HEK293 (cell line): ENCODE measurements at regions of chr6 and their contacts with region 1.

Region 1: GRCh38 chr6:24581084-24581669 is 64.8 kb downstream of the KIAA0319 start:
- H3K4me3 ChIP-seq: no peak overlapping the region
- H3K27ac ChIP-seq: no peak overlapping the region
- H3K4me1 ChIP-seq: peaks cover 12% of the 10 kb centered on the region
- CTCF ChIP-seq: peak; percentile 81

Region 2: DNA sequence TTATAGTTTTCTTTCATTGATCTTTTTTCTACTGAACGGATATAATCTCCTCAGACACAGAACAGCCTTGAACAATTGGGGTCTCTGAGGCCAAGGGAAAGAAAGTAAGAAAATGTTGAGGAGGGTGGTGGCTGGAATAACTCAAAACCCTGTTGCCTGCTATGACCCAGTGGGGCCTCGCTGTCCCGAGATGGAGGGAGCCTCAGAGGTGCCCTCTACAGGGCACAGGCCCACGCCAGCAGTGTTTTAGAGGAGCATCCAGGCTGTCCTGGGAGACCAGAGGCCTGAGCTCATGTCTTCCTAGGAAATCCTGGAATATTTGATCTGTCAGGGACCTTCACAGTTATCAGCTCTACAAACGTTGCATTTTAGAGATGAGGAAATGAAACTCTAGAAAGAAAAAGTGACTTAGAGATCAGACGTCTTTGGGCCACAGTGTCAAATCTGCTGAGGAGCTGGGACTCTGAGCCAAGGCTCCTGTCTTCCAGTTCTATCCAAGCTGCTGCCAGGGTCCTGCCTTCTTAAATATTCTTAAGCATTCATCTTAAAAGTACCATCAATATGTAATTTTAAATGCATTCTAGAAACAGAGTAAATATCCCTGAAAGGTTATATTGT is 60.1 kb before region 1 on chr6:
- CTCF ChIA-PET with region 1: interaction called, 32 read pairs
- POLR2A ChIA-PET with region 1: no interaction called
- H3K4me3 ChIP-seq: no peak overlapping the region
- H3K27ac ChIP-seq: no peak overlapping the region
- H3K4me1 ChIP-seq: no peaks in the 10 kb centered on the region
- CTCF ChIP-seq: peak; percentile 39; the same call in 1 of the 2 replicates

Region 3: DNA sequence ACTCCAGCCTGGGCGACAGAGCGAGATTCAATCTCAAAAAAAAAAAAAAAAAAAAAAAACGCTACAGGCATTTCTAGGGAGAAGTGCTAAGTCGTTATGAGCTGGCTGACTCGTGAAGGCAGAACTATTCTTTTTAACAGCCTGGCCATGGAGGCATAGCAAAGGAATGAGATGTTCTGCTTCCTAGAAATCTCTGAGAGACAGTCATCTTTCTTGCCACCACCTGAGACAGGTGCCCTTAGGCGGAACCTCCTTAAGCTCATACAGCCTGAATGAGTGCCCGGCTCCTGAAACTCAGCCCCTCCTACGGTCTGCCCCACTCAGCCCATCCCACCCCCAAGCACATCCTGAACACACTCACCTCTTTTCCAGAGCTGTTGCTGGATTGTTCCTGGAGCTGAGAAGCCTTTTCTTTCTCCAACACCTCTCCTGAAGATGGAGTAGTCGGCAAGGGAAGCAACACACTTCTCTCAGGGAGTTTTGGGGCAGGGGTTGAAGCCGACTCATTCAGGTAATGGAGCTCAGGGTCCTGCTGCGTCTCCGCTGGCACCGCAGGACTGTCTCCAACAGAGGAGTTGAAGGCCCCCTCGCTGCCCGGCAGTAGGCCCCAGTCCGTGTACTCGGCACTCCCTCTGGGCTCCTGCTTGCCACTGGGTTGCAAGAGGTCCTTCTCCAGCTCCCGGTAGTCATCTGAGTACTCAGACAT is 14.5 kb after region 1 on chr6:
- CTCF ChIA-PET with region 1: interaction called, 21 read pairs
- POLR2A ChIA-PET with region 1: interaction called, 4 read pairs
- H3K4me3 ChIP-seq: no peak overlapping the region
- H3K27ac ChIP-seq: no peak overlapping the region
- H3K4me1 ChIP-seq: no peaks in the 10 kb centered on the region
- CTCF ChIP-seq: no peak

Region 4: DNA sequence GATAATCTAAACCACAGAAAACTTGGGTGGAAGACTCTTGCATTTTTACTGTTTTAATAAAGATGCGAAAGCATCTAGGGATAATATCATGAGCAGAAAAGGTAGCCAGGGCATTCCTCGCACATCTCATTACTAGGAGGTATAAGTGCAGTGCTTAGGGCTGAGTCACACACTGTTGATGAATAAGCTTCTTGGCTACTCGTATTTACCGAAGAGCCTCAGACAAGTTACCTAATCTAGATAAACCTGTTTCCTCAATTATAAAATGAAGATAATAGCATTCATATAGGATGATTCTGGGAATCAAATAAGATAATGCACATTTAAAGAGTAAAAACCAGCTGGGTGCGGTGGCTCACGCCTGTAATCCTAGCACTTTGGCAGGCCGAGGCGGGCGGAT is 65.6 kb after region 1 on chr6:
- CTCF ChIA-PET with region 1: interaction called, 10 read pairs
- POLR2A ChIA-PET with region 1: no interaction called
- H3K4me3 ChIP-seq: no peak overlapping the region
- H3K27ac ChIP-seq: no peak overlapping the region
- H3K4me1 ChIP-seq: no peaks in the 10 kb centered on the region
- CTCF ChIP-seq: no peak

Region 5: GRCh38 chr6:24689964-24690363 is 108.8 kb after region 1 on chr6:
- CTCF ChIA-PET with region 1: interaction called, 18 read pairs
- POLR2A ChIA-PET with region 1: no interaction called
- H3K4me3 ChIP-seq: no peak overlapping the region
- H3K27ac ChIP-seq: no peak overlapping the region
- H3K4me1 ChIP-seq: peaks cover 4% of the 10 kb centered on the region; the same call in 1 of the 2 replicates
- CTCF ChIP-seq: no peak

Region 6: GRCh38 chr6:24766680-24767462 is 185.7 kb after region 1 on chr6:
- CTCF ChIA-PET with region 1: interaction called, 15 read pairs
- POLR2A ChIA-PET with region 1: no interaction called
- H3K4me3 ChIP-seq: no peak overlapping the region
- H3K27ac ChIP-seq: no peak overlapping the region
- H3K4me1 ChIP-seq: no peaks in the 10 kb centered on the region
- CTCF ChIP-seq: no peak